ENCODE measurements at regions of chr18 and their contacts with region 1.

Region 1: GRCh38 chr18:50671376-50671775 is 111.5 kb downstream of the MAPK4 start:
- DNase-seq: no peak
- H3K4me3 ChIP-seq: no peak overlapping the region
- H3K27ac ChIP-seq: no peak overlapping the region
- H3K4me1 ChIP-seq: no peaks in the 10 kb centered on the region
- H3K27me3 ChIP-seq: no peaks in the 10 kb centered on the region
- CTCF ChIP-seq: no peak
- POLR2A ChIP-seq: no peak

Region 2: GRCh38 chr18:50545936-50546335 is 125.4 kb before region 1 on chr18:
- intact Hi-C with region 1: no loop called
- DNase-seq: no peak
- H3K4me3 ChIP-seq: no peak overlapping the region
- H3K27ac ChIP-seq: no peak overlapping the region
- H3K4me1 ChIP-seq: no peaks in the 10 kb centered on the region
- H3K27me3 ChIP-seq: no peaks in the 10 kb centered on the region
- CTCF ChIP-seq: no peak
- POLR2A ChIP-seq: no peak

Region 3: DNA sequence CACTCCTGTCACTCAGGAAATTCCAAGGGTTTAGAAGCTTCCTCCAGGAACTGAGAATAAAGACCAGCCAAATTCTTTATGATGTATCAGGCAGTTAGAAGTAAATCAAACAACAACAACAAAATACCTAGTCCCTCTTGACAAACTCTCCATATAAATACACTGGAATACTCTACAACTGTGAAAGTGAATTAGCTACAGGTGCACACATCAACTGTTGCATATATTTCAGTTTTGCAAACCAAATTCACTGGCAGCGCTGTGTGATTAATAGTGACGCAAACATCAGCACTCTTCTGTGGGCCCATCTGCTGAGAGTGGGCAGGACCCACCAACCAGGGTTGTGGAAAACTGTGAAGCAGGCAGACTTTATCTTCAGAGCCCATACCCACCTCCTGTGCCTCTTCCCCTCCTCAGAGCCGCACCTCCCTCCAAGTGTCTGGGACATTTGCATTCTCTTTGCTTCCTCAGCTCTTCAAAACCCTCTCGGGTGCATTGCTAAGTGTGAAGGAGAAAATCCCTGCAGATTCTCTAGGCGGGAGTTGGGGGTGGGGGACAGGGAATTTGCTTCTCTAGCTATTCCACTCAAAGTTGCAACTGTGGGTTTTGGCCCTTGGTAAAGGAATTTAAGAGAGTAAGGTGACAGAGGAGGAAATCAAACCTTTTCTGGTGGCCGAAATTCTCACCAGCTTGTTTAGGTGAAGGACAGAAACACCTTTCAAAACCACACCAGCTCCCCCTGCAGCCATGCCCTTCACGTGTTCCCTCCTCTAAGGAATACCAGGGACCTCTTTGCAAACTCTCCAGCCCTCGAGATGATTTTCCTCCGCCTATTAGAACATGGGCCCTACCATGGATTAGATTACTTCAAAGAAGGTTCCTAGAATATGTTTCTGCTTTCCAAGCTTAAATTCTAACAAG is 29.1 kb after region 1 on chr18:
- intact Hi-C with region 1: loop called (anchors 1 kb)
- DNase-seq: no peak
- H3K4me3 ChIP-seq: no peak overlapping the region
- H3K27ac ChIP-seq: no peak overlapping the region
- H3K4me1 ChIP-seq: no peaks in the 10 kb centered on the region
- H3K27me3 ChIP-seq: no peaks in the 10 kb centered on the region
- CTCF ChIP-seq: no peak
- POLR2A ChIP-seq: no peak

Region 4: DNA sequence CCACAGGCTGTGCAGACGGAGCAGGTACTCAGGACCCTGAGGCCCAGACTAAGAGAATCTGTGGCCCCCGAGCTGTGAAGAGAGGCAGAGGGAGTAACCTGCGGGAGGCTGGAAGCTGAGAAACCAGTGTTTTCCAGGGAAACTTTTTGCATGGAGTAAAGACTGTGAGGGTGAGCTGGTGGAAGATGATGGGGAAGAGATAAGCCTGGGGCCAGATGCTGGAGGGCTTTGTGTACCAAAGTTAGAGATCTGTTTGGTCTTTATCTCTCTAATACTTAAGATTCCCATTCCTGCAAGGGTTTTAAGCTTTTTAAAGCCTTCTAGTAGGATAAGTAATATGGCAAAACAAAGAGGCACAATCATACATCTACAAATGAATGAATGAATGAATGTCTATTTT is 569.9 kb after region 1 on chr18:
- intact Hi-C with region 1: no loop called
- DNase-seq: no peak
- H3K4me3 ChIP-seq: no peak overlapping the region
- H3K27ac ChIP-seq: no peak overlapping the region
- H3K4me1 ChIP-seq: no peaks in the 10 kb centered on the region
- H3K27me3 ChIP-seq: no peaks in the 10 kb centered on the region
- CTCF ChIP-seq: no peak
- POLR2A ChIP-seq: no peak

Measured in breast epithelium (tissue), 4 donors.